HepG2 (cell line): ENCODE measurements at regions of chr9 and their contacts with region 1.

Region 1: DNA sequence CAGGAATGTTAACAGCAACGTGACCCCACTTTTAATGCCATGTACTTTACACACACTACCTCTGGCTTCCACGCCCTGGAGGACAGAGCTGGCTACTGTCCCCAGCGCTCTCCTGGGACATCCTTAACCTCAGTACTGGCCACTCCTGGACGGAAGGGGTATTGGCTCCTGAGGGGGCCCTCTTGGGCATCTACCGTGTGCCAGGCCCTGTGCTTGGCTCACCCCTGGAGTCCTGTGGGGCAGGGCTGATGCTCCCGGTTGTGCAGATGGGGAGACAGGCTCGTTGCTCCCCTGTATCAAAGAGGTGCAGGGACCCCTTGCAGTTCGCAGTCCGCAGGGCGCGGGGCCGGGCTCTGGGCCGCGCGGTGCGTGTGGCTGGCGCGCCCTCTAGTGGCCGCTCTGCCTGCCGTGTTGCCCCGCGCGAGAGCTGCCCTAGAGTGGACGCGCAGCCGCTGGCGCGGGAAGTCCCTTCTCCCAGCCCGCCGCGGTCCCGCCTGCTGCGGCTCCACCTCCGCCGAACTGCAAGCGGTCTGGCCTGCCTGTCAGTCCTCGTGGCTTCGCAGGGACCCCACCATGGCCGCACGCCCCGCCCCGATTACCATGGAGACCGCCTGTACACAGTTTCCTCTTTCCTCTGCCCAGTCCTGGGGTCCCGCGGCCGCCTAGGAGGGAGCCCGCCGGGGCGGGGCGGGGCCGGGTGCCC is at the start of gene WDR38:
- DNase-seq: peak; percentile 77
- ATAC-seq: peak; percentile 79
- H3K4me3 ChIP-seq: peak within 1 kb of the TSS; percentile 24 to 69 (median 54); a peak in 5 of 6 replicates
- H3K27ac ChIP-seq: no peak within 1 kb of the TSS
- H3K4me1 ChIP-seq: peaks cover 38% of the 10 kb centered on the region
- H3K27me3 ChIP-seq: no peaks in the 10 kb centered on the region; a peak in 2 of 5 replicates
- CTCF ChIP-seq: peak; percentile 96
- EP300 ChIP-seq: no peak
- POLR2A ChIP-seq: no peak
- RAD21 ChIP-seq: peak; percentile 99
- total RNA-seq, gene WDR38: not detected in 2 replicates

Region 2: DNA sequence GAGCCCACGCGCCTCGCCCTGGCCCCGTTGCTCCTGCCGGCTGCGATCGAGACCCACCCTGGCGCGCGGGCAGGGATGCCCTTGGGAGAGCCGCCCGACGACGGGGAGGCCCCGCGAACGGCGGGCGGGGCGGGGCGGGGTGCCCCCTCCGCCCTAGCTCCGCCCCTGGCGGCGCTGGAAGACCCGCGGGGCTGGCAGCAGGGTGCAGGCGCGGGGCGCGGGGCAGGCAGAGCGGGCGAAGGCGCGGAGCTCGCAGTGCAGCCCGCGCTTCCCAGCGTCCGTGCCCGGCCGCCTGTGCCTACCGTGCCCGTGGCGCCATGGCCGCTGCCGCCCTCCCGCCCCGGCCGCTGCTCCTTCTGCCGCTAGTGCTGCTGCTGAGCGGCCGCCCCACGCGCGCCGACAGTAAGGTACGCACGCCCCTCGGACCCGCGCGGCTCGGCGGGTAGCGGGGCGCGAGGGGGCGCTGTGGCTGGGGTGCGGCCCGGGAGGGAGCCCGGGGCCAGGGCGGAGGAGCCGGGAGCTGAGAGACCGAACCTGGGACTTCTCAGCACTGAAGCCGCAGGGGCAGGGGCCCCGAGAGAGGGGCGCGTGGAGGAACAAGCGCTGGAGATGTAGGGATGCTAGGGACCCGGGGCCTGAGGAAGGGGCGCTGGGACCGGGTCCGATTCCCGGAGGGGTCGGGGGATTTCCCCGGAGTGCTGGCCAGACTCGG is 75.9 kb before region 1 on chr9 and contains the start of gene OLFML2A:
- CTCF ChIA-PET with region 1: interaction called, 167 read pairs
- POLR2A ChIA-PET with region 1: interaction called, 39 read pairs
- in situ Hi-C with region 1: loop called (anchors 5 kb)
- intact Hi-C with region 1: loop called (anchors 1 kb)
- DNase-seq: no peak
- ATAC-seq: peak; percentile 23
- H3K4me3 ChIP-seq: peak within 1 kb of the TSS; percentile 47 to 72 (median 50)
- H3K27ac ChIP-seq: no peak within 1 kb of the TSS
- H3K4me1 ChIP-seq: peaks cover 61% of the 10 kb centered on the region
- H3K27me3 ChIP-seq: peaks cover 2 to 22% of the 10 kb centered on the region in 2 experiments; a peak in 4 of 5 replicates
- CTCF ChIP-seq: peak; percentile 68; the same call in 1 of the 2 replicates
- EP300 ChIP-seq: no peak
- POLR2A ChIP-seq: no peak
- RAD21 ChIP-seq: no peak; the same call in 1 of the 2 replicates
- total RNA-seq, gene OLFML2A: 0.02 TPM in 1 of 2 replicates, not detected in the other

Region 3: DNA sequence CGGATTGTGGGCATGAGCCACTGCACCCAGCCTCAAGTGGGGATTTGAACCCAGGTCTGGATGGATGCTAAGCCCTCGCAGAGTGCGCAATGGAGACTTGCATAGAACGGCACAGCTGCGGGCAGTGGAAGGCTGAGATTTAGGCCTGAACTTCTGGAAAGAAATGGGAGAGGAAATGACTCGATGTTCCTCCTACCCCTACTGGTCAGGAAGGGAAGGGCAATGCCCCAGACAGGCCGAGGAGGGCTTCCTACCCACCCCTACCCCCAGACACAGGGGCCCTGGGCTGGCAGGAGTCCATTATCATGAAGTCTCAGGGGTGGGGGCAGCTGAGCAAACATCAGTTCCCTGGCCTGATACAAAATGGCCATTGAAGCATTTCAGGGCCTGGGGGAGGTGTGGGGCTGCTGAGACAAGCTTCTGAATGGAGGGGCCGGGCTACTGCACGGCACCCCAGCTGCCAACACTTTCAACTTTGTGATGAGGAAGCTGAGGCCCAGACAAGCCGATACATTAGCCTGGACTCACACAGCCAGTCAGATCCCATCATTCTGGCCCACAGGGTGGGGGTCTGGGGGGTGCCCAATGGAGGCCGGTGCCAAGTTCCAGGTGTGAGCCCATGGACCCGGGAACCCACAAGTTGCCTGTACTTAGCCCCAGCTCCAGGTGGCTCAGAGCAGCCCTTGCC is 13.2 kb before region 1 on chr9:
- CTCF ChIA-PET with region 1: interaction called, 16 read pairs
- POLR2A ChIA-PET with region 1: interaction called, 3 read pairs
- in situ Hi-C with region 1: no loop called
- intact Hi-C with region 1: no loop called
- DNase-seq: peak; percentile 43
- ATAC-seq: peak; percentile 73
- H3K4me3 ChIP-seq: peak overlapping the region in 1 of 3 experiments; percentile 60; a peak in 1 of 6 replicates
- H3K27ac ChIP-seq: no peak overlapping the region
- H3K4me1 ChIP-seq: peaks cover 34% of the 10 kb centered on the region
- H3K27me3 ChIP-seq: peaks cover 0 to 6% of the 10 kb centered on the region in 2 experiments; a peak in 2 of 5 replicates
- CTCF ChIP-seq: peak; percentile 58
- EP300 ChIP-seq: no peak
- POLR2A ChIP-seq: no peak
- RAD21 ChIP-seq: no peak